ENCODE measurements at regions of chr12 and their contacts with region 1.

Region 1: GRCh38 chr12:91361864-91362263 is 179.2 kb upstream of the DCN start:
- DNase-seq: peak; percentile 12 to 36 (median 29)
- ATAC-seq: peak; percentile 73
- H3K4me3 ChIP-seq: no peak overlapping the region
- H3K27ac ChIP-seq: no peak overlapping the region
- H3K4me1 ChIP-seq: no peaks in the 10 kb centered on the region
- H3K27me3 ChIP-seq: no peaks in the 10 kb centered on the region
- CTCF ChIP-seq: peak in 1 of 3 experiments; percentile 60; a peak in 3 of 6 replicates
- EP300 ChIP-seq: no peak
- POLR2A ChIP-seq: no peak
- RAD21 ChIP-seq: peak; percentile 40 to 55; a peak in 3 of 4 replicates

Region 2: GRCh38 chr12:91307957-91308670 is 53.8 kb before region 1 on chr12:
- CTCF ChIA-PET with region 1: no interaction called
- POLR2A ChIA-PET with region 1: no interaction called
- in situ Hi-C with region 1: no loop called
- intact Hi-C with region 1: loop called (anchors 10 kb)
- DNase-seq: no peak
- ATAC-seq: no peak
- H3K4me3 ChIP-seq: no peak overlapping the region
- H3K27ac ChIP-seq: no peak overlapping the region
- H3K4me1 ChIP-seq: no peaks in the 10 kb centered on the region
- H3K27me3 ChIP-seq: no peaks in the 10 kb centered on the region
- CTCF ChIP-seq: no peak
- EP300 ChIP-seq: no peak
- POLR2A ChIP-seq: no peak
- RAD21 ChIP-seq: no peak

Region 3: GRCh38 chr12:92649511-92650227 is 1287.8 kb after region 1 on chr12:
- CTCF ChIA-PET with region 1: interaction called, 12 read pairs
- POLR2A ChIA-PET with region 1: no interaction called
- in situ Hi-C with region 1: no loop called
- intact Hi-C with region 1: loop called (anchors 10 kb)
- DNase-seq: peak; percentile 42 to 77 (median 50)
- ATAC-seq: peak; percentile 97
- H3K4me3 ChIP-seq: no peak overlapping the region
- H3K27ac ChIP-seq: no peak overlapping the region
- H3K4me1 ChIP-seq: no peaks in the 10 kb centered on the region
- H3K27me3 ChIP-seq: peaks cover 8 to 13% of the 10 kb centered on the region in 2 experiments; a peak in 4 of 5 replicates
- CTCF ChIP-seq: peak; percentile 65 to 78 (median 66)
- EP300 ChIP-seq: no peak
- POLR2A ChIP-seq: no peak
- RAD21 ChIP-seq: peak; percentile 81 to 89

Measured in K562 (cell line).